Left ventricle myocardium inferior (tissue), 1 donor: ENCODE measurements at regions of chr14 and their contacts with region 1.

Region 1: GRCh38 chr14:58327019-58327418 is 28.7 kb downstream of the ARID4A start:
- DNase-seq: no peak
- H3K4me3 ChIP-seq: no peak overlapping the region
- H3K27ac ChIP-seq: no peak overlapping the region
- H3K4me1 ChIP-seq: peaks cover 15% of the 10 kb centered on the region
- H3K27me3 ChIP-seq: no peaks in the 10 kb centered on the region
- CTCF ChIP-seq: no peak

Region 2: DNA sequence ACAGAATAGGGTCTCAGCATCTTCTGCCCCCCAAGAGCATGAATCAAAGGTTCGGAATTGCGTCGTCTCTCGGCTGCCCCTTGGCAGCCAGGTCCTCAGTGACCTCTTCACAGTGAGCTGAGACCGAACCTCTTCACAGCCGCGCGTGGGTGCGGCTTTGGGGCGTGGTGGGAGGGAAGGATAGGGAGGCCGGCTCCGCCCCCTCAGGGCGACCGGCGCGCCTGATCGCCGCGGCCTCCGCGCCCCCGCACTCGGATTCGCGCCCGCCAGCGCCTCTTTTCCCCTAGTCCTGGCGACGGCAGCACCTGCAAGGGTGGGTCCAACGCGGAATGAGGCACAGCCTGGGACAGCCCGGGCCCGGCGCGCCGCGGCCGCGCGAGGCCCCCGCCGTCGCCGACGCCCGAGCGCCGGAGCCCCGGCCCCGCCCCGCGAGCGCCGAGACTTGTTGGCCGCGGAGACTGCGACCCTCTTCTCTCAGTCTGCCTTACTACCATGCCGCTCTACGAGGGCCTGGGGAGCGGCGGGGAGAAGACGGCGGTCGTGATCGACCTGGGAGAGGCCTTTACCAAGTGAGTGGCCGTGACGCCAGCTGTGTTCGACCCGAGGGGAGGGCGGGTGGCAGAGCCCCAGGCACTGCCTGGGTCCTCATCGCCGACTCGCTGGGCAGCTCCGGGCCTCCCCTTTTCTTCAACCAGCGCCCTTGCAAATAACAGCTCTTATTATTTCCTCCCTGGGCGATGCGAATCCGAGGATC is 127.1 kb before region 1 on chr14 and contains the start of gene ACTR10:
- intact Hi-C with region 1: loop called (anchors 10 kb)
- DNase-seq: peak; percentile 88
- H3K4me3 ChIP-seq: peak within 1 kb of the TSS; percentile 94
- H3K27ac ChIP-seq: peak within 1 kb of the TSS; percentile 96
- H3K4me1 ChIP-seq: peaks cover 28% of the 10 kb centered on the region
- H3K27me3 ChIP-seq: no peaks in the 10 kb centered on the region
- CTCF ChIP-seq: no peak
- total RNA-seq, gene ACTR10: 71.8 TPM